ENCODE measurements at regions of chrX and their contacts with region 1.

Region 1: GRCh38 chrX:70096052-70096451 is 33.8 kb downstream of the OTUD6A start:
- DNase-seq: no peak
- ATAC-seq: peak in 2 of 8 donors; percentile 46 to 65
- H3K4me3 ChIP-seq: no peak overlapping the region
- H3K27ac ChIP-seq: no peak overlapping the region
- H3K4me1 ChIP-seq: peaks cover 0 to 5% (median 0%) of the 10 kb centered on the region in 9 donors
- H3K27me3 ChIP-seq: peaks cover 0 to 23% (median 0%) of the 10 kb centered on the region in 7 donors
- CTCF ChIP-seq: peak in 5 of 9 donors; percentile 10 to 42 (median 24)

Region 2: GRCh38 chrX:69493193-69493592 is 602.9 kb before region 1 on chrX:
- intact Hi-C with region 1: loop called in 9 of 10 experiments (anchors 2 to 10 kb)
- DNase-seq: peak; percentile 6 to 14
- ATAC-seq: peak in 7 of 8 donors; percentile 38 to 63 (median 49)
- H3K4me3 ChIP-seq: no peak overlapping the region
- H3K27ac ChIP-seq: no peak overlapping the region
- H3K4me1 ChIP-seq: no peaks in the 10 kb centered on the region
- H3K27me3 ChIP-seq: peaks cover 0 to 67% (median 0%) of the 10 kb centered on the region in 7 donors
- CTCF ChIP-seq: peak in 8 of 9 donors; percentile 10 to 54 (median 46)

Region 3: DNA sequence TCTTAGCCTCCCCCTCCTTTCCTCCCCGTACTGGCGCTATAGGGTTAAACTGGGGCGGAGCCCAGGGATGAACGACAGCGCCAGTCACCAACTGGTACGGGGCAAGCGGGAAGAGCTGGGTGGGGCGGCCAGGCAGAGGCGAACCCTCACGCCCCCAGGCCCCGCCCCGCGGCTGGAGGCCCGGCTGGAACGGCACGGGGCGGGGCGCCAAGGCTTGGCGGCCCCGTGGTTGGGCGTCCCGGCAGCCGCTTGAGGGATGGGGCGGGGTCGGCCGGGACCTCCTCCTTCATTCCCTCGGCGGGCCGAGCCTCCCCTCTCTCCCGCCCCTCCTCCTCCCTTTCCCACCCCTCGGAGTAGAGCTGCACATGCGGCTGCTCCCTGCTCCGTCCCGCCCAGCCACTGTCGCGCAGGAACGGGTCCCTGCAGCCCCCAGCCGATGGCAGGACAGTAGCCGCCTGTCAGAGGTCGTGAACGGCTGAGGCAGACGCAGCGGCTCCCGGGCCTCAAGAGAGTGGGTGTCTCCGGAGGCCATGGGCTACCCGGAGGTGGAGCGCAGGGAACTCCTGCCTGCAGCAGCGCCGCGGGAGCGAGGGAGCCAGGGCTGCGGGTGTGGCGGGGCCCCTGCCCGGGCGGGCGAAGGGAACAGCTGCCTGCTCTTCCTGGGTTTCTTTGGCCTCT is 480.1 kb before region 1 on chrX and contains the start of gene EDA:
- intact Hi-C with region 1: loop called in 2 of 10 experiments (anchors 10 kb)
- DNase-seq: peak; percentile 87 to 88
- ATAC-seq: peak; percentile 96 to 99 (median 98)
- H3K4me3 ChIP-seq: peak within 1 kb of the TSS; percentile 49 to 87 (median 68)
- H3K27ac ChIP-seq: peak within 1 kb of the TSS in 8 of 10 donors; percentile 35 to 64 (median 48)
- H3K4me1 ChIP-seq: peaks cover 0 to 16% (median 0%) of the 10 kb centered on the region in 9 donors
- H3K27me3 ChIP-seq: peaks cover 0 to 46% (median 0%) of the 10 kb centered on the region in 7 donors
- CTCF ChIP-seq: no peak
- total RNA-seq, gene EDA: 4.2 to 9.4 (median 5.4) TPM

Region 4: GRCh38 chrX:69900491-69900890 is 195.6 kb before region 1 on chrX:
- intact Hi-C with region 1: loop called in 1 of 10 experiments (anchors 10 kb)
- DNase-seq: no peak
- ATAC-seq: no peak
- H3K4me3 ChIP-seq: no peak overlapping the region
- H3K27ac ChIP-seq: no peak overlapping the region
- H3K4me1 ChIP-seq: no peaks in the 10 kb centered on the region
- H3K27me3 ChIP-seq: peaks cover 0 to under 1% (median 0%) of the 10 kb centered on the region in 7 donors
- CTCF ChIP-seq: no peak

Region 5: GRCh38 chrX:70042399-70043371 is 53.4 kb before region 1 on chrX:
- intact Hi-C with region 1: loop called in 3 of 10 experiments (anchors 5 to 10 kb)
- DNase-seq: no peak
- ATAC-seq: no peak
- H3K4me3 ChIP-seq: no peak overlapping the region
- H3K27ac ChIP-seq: no peak overlapping the region
- H3K4me1 ChIP-seq: peaks cover 0 to 6% (median 0%) of the 10 kb centered on the region in 9 donors
- H3K27me3 ChIP-seq: no peaks in the 10 kb centered on the region
- CTCF ChIP-seq: no peak

Measured in heart right ventricle (tissue), 16 donors.